ENCODE measurements at regions of chr19 and their contacts with region 1.

Region 1: DNA sequence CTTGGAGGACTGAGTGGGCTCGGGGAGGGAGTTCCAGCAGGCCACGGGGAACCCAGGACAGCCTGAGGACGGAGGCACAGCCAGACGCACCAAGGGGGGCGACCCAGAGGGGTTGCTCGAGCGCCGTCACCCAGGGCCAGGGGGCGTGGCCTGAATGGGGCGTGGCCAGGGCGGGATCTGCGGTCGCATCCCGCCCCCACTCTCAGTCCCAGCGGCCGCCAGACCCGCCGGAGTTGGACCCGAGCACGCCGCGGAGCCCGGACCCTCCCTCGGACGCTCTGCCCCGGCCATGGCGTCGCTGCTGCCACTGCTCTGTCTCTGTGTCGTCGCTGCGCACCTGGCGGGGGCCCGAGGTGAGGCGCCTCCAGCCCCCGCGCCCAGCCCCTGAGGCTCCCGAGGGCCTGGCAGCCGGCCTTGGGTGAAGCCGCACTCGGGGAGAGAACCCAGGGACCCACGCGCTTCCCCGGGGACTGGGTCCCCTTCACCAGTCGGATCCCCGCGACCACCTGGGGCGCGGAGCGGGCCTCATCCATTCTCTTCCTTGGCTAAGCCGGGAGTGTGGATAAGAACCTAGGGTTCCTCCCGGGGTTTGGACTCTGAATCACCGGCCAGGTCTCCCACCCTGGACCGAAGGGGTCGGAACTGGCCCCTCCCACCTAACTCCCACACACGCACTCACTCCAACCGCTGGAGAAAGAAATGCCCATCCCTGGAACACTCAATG is at the start of gene CILP2:
- DNase-seq: peak; percentile 53
- H3K4me3 ChIP-seq: peak within 1 kb of the TSS; percentile 50
- H3K27ac ChIP-seq: no peak within 1 kb of the TSS
- H3K4me1 ChIP-seq: no peaks in the 10 kb centered on the region
- H3K27me3 ChIP-seq: no peaks in the 10 kb centered on the region
- total RNA-seq, gene CILP2: 0.11 and 0.25 TPM in 2 replicates

Region 2: DNA sequence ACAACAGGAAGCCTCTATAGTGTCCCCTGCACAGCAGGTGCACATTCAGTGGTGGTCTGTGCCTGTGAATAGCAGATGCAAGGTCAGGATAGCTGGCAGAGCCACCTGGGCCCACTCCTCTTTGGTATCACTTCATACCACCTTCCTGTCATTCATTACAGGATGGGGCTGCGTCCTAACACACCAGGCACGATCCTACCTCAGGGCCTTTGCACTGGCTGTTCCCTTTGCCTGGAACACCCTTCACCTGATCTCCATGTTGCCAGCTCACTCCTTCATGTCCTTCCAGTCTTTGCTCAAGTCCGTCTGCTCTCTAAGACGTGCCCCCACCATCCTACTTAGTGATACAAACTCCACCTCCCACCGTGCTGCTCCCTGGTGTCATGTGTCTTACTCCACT is 94.4 kb after region 1 on chr19:
- in situ Hi-C with region 1: no loop called
- DNase-seq: no peak
- H3K4me3 ChIP-seq: no peak overlapping the region
- H3K27ac ChIP-seq: no peak overlapping the region
- H3K4me1 ChIP-seq: no peaks in the 10 kb centered on the region
- H3K27me3 ChIP-seq: no peaks in the 10 kb centered on the region

Region 3: DNA sequence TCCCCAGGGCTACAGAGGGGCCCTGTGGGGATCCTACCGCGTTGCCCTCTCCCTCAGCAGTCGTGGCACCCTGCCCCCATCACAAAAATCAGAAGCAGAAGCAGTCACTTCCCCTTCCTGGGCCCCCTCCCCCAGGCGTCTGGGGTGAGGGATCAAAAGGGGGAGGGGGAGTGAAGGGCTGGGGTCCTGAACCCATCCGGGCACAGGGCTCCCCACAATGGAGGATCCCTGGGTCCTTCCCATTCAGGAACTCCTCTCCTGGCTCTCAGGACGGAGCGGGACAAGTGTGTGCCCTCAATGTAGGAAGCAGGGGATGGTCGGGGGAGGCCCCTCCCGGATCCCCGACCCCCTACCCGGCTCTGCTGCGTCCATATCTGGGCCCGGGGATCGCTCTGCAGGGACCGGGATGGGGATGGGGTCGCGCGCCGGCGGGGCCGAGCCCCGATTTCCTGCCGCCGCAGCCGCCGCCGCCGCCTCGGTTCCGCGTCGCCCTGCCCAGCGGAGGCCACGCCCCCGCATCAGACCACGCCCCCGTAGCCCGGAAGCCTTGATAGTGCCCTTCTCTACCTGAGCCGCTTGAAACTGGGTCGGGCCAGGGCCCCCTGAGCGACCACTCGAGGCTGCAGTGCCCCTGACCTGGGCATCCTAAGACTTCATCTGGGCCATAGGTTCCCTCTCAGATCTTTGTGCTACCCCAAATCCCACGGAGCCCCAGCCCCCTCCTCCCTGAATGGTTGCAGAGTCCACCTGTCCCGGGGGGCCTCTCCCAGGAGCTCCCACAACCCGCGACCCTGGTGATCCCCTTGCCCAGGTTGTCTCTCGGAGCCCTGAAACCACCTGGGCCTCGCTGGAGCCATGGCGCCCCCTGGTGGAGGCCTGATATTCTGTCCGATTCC is 105.2 kb after region 1 on chr19 and contains the start of gene GMIP:
- in situ Hi-C with region 1: loop called (anchors 5 kb)
- DNase-seq: peak; percentile 71
- H3K4me3 ChIP-seq: peak within 1 kb of the TSS; percentile 94
- H3K27ac ChIP-seq: no peak within 1 kb of the TSS
- H3K4me1 ChIP-seq: no peaks in the 10 kb centered on the region
- H3K27me3 ChIP-seq: no peaks in the 10 kb centered on the region
- total RNA-seq, gene GMIP: 2.9 and 5.0 TPM in 2 replicates

Region 4: GRCh38 chr19:19873381-19873780 is 335.2 kb after region 1 on chr19:
- in situ Hi-C with region 1: no loop called
- DNase-seq: peak; percentile 2
- H3K4me3 ChIP-seq: no peak overlapping the region
- H3K27ac ChIP-seq: no peak overlapping the region
- H3K4me1 ChIP-seq: no peaks in the 10 kb centered on the region
- H3K27me3 ChIP-seq: no peaks in the 10 kb centered on the region